Activated CD4-positive, alpha-beta memory T cell treated with anti-CD3 and anti-CD28 coated beads for 36 hours (primary cell): ENCODE measurements at regions of chr1 and their contacts with region 1.

Region 1: DNA sequence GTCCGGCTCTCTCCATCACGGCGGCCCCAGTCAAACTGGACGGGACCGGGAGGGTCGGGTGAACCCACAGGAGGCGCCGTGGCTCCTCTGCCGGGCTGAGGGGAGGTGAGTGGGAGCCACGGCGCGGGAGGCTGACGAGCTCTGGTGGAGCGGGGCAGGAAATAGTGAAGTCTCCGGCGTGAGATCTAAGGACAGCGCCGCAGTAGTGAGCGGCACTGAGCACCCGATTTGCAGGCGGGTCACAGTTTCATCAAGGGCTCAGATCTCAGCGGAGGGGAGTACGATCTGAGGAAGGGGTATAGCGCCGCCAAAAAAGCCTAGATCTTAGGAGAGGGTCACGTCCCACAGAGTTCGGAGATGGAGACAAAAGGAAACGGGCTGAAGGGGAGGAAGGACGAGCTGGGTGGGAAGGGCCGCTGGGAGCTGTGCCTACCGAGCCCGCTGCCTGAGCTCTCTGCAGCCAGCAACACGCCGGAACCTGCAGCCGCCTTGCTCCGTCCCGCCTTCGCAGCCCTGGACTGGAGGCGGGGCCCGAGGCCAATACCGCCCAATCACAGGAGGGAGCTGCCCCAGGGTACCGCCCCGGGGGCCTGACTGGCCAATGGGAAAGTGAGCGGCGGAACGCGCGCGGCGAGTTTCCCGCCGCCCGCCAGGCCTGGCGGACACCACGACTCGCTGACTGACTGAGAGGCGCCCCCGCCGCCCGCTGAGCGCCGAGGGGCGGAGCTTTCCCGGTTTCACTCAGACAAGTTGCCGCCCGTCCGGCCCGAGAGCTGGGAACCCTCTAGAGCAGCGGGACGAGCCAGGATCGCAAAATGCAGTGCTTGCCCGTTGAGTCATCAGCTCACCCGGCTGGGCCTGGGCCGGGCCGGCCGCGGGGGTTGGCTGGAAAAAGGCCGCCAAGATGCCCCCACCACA is 1.9 kb downstream of the SFN start:
- DNase-seq: peak; percentile 97
- H3K4me3 Mint-ChIP-seq: peak overlapping the region; percentile 98
- H3K27ac Mint-ChIP-seq: peak overlapping the region; percentile 94
- H3K4me1 Mint-ChIP-seq: peaks cover 29% of the 10 kb centered on the region
- H3K27me3 Mint-ChIP-seq: no peaks in the 10 kb centered on the region

Region 2: DNA sequence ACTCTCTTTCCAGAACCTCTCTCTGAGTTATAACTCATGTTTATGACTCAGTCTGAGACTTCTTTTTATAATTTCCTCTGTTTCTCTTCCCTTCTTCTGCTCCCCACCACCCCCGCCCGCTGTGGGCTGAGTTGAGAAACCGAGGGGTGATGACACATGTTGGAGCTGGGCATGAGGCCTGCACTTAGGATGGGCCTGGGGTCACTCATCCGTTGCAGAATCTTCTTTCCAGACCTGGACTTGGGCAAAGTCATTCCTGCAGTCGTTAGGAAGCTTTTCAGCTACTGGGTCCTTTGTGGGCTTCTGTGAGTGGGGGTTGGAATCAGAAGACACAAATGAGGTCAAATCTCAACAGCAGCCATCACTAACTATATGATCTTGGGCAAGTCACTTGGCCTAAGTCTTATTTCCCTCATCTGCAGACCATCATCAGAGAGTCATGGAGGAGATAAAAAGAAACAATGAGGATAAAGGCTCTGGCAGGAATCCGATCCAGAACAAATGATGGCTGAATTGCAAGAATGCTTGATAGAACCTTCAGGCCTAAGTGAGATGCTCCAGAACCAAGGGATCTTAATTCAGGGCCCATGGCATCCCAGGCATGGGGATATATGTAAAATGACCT is 281.9 kb before region 1 on chr1:
- CTCF ChIA-PET with region 1: interaction called, 4 read pairs
- POLR2A ChIA-PET with region 1: interaction called, 4 read pairs
- intact Hi-C with region 1: loop called (anchors 5 kb)
- DNase-seq: peak; percentile 94
- H3K4me3 Mint-ChIP-seq: no peak overlapping the region
- H3K27ac Mint-ChIP-seq: peak overlapping the region; percentile 73
- H3K4me1 Mint-ChIP-seq: peaks cover 47% of the 10 kb centered on the region
- H3K27me3 Mint-ChIP-seq: no peaks in the 10 kb centered on the region

Region 3: GRCh38 chr1:26811057-26811456 is 53.8 kb before region 1 on chr1:
- CTCF ChIA-PET with region 1: interaction called, 18 read pairs
- POLR2A ChIA-PET with region 1: interaction called, 8 read pairs
- intact Hi-C with region 1: no loop called
- DNase-seq: no peak
- H3K4me3 Mint-ChIP-seq: no peak overlapping the region
- H3K27ac Mint-ChIP-seq: peak overlapping the region; percentile 38
- H3K4me1 Mint-ChIP-seq: peaks cover 20% of the 10 kb centered on the region
- H3K27me3 Mint-ChIP-seq: no peaks in the 10 kb centered on the region

Region 4: DNA sequence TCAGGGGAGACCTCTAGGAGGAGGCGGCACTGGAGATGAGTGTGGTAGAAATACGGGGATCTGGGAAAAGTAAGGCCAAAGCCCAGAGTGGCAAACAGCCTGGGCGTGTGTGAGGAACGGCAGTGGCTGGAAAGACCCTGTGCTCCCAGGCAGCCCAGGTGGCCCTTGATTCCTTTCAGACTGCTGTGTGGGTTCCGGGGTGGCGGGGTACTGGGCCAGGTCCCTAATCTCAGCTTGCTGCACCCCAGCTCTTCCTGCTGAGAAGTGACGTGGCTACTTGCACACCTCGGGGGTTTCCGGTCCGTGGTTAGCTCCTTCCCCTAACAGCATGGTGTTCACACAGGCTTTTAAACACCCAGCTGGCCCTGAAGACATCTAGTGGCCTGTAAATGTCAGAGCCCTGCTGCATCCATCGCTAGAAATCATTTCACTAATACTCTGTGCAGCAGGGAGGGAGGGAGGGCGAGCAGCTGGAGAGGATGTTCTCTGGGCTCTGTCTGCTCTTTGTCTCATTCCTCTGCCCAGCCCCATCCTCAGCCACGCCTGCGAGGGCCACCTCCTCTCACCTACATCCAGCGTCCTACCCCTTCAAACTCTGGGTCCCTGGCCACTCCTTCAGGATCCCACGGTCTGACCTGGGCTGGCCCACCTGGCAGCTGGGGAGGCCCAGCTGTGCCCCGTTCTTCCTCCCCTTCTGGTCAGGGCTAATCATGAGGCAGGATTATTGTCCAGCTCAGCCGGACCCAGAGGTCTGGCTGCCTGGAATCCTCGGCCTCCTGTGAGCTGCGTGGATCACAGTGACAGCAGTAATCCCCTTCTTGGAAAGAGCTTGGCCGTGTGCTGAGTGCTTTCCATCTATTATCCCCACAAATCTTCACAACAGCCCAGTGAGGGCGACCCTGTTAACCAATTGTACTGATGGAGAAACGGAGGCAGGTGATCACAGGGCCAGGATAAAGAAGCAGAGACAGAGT is 31.1 kb before region 1 on chr1:
- CTCF ChIA-PET with region 1: interaction called, 11 read pairs
- POLR2A ChIA-PET with region 1: interaction called, 7 read pairs
- intact Hi-C with region 1: loop called (anchors 2 kb)
- DNase-seq: peak; percentile 93
- H3K4me3 Mint-ChIP-seq: peak overlapping the region; percentile 72
- H3K27ac Mint-ChIP-seq: peak overlapping the region; percentile 100
- H3K4me1 Mint-ChIP-seq: peaks cover 78% of the 10 kb centered on the region
- H3K27me3 Mint-ChIP-seq: no peaks in the 10 kb centered on the region

Region 5: DNA sequence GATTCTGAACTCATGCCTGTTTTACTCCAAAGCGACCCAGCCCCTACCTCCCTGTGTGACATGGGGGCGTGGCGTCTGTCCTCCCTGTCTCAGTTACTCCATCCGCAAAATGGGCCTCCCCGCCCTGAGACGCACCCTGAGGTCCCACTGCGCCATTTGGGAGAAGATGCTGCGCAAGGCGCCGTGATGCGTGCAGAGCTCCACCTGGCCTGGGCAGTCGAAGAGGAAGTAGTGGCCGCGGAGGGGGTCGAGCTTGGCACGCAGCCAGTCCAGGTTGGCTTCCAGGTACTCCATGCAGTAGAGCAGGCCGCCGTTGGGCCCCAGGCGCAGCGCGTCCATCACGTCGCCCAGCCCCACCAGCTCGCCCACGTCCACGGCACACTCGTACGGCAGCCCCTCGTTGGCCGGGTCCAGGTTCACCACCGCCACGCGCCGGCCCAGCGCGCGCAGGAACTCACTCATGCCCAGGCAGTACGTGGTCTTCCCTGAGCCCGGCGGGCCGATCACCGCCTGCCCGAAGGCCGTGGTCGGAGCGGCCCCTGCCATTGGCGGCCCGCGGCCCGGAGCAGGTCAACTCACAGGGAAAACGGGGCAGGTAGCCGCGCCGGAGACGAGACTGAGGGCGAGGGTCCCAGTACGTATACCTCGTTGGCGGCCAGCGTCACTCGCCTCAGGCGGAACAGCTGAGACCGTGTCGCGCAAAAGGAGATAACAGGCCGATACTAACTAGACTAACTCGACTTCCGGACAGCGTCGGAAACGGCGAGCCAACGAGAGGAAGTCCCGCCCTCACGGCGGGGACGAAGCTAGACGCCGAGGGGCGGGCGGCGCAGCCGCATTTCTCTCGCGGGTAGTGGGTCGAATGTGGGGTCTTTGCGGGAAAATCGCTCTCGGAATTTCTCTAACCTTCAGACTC is 24.9 kb after region 1 on chr1 and contains the start of gene GPN2:
- CTCF ChIA-PET with region 1: interaction called, 10 read pairs
- POLR2A ChIA-PET with region 1: interaction called, 28 read pairs
- intact Hi-C with region 1: no loop called
- DNase-seq: peak; percentile 86
- H3K4me3 Mint-ChIP-seq: peak within 1 kb of the TSS; percentile 90
- H3K27ac Mint-ChIP-seq: peak within 1 kb of the TSS; percentile 85
- H3K4me1 Mint-ChIP-seq: peaks cover 36% of the 10 kb centered on the region
- H3K27me3 Mint-ChIP-seq: no peaks in the 10 kb centered on the region
- total RNA-seq, gene GPN2: 35.4 to 38.3 TPM